Naive thymus-derived CD4-positive, alpha-beta T cell (primary cell): ENCODE measurements at regions of chr10 and their contacts with region 1.

Region 1: DNA sequence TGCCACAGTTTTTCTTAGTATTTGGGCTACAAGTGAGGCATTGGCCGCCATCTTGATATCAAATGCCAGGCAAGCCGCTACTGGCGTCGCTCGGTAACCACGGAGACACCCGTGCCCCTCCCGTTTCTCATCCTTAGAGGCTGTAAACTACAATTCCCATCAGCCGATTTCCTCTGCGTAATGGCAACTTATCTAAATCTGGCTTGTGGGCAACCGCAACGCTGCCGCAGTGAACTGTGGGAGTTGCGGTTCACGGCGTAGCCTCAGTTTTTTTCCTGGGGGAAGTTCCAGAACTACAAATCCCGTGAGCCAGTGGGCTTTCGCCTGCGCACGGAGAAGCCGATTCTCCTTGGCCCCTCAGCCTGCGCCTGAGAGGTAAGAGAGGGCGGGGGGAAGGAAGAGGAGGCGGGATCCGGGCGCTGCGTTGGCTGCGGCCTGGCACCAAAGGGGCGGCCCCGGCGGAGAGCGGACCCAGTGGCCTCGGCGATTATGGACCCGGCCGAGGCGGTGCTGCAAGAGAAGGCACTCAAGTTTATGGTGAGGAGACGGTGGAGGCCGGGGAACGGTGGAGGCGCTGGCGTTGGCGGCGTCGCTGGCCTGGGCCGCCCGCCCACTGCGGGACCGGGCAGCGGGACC is at the start of gene BTRC:
- DNase-seq: peak; percentile 76 to 99 (median 98)
- ATAC-seq: peak; percentile 96
- H3K4me3 ChIP-seq: peak within 1 kb of the TSS; percentile 69
- H3K4me3 Mint-ChIP-seq: peak within 1 kb of the TSS; percentile 93 to 99 (median 98)
- H3K27ac ChIP-seq: peak within 1 kb of the TSS; percentile 94
- H3K27ac Mint-ChIP-seq: peak within 1 kb of the TSS; percentile 94 to 99 (median 98)
- H3K4me1 ChIP-seq: peaks cover 5 to 8% of the 10 kb centered on the region in 2 donors
- H3K4me1 Mint-ChIP-seq: peaks cover 15 to 41% (median 33%) of the 10 kb centered on the region in 7 donors
- H3K27me3 ChIP-seq: no peaks in the 10 kb centered on the region
- H3K27me3 Mint-ChIP-seq: peaks cover 5 to 19% (median 14%) of the 10 kb centered on the region in 5 donors
- total RNA-seq, gene BTRC: 14.7 to 26.1 (median 17.6) TPM

Region 2: GRCh38 chr10:100185364-100186252 is 1168.2 kb before region 1 on chr10 and contains the start of gene ERLIN1:
- CTCF ChIA-PET with region 1: no interaction called
- POLR2A ChIA-PET with region 1: no interaction called
- intact Hi-C with region 1: loop called in 1 of 2 experiments (anchors 5 kb)
- DNase-seq: peak; percentile 86 to 97 (median 91)
- ATAC-seq: peak; percentile 96
- H3K4me3 ChIP-seq: peak within 1 kb of the TSS; percentile 96
- H3K4me3 Mint-ChIP-seq: peak within 1 kb of the TSS; percentile 93 to 100 (median 96)
- H3K27ac ChIP-seq: peak within 1 kb of the TSS; percentile 84
- H3K27ac Mint-ChIP-seq: peak within 1 kb of the TSS; percentile 89 to 97 (median 95)
- H3K4me1 ChIP-seq: peaks cover 15 to 17% of the 10 kb centered on the region in 2 donors
- H3K4me1 Mint-ChIP-seq: peaks cover 40 to 79% (median 62%) of the 10 kb centered on the region in 7 donors
- H3K27me3 ChIP-seq: no peaks in the 10 kb centered on the region
- H3K27me3 Mint-ChIP-seq: no peaks in the 10 kb centered on the region
- total RNA-seq, gene ERLIN1: 3.9 to 17.0 (median 12.4) TPM

Region 3: DNA sequence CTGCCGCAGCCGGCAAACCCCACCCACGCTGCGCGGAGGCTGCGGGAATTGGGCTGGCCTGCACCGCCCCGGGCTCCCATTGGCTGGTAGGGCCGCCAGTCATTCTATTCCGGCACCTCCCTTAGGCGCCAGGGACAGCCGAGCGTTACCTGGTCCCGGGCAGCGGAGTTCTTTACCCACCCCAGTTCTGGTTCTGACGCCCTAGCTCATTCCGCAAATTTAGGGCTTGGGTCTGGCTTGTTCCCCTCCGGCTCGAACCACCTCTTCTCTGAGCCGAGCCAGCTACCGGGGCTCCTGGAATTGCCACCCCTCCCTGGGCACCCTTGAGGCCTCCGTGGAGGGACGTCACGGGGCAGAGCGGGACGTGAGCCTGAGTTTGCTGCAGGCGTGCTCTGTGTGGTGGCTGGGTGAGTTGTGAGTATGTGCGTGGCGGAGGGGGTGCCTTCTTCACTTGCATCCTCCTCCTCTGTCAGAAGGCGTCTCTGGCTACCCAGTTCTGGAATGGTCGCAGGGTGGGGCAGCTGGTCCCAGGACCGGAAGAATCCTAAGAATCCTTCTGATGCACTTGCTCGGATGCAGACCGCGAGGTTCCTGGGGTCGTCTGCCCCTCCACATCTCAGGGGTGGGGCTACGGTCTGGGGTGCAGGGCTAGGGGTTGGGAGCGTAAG is 322.5 kb before region 1 on chr10 and contains the starts of genes PDZD7 and SFXN3:
- CTCF ChIA-PET with region 1: no interaction called
- POLR2A ChIA-PET with region 1: no interaction called
- intact Hi-C with region 1: loop called in 1 of 2 experiments (anchors 10 kb)
- DNase-seq: peak; percentile 93 to 98 (median 97)
- ATAC-seq: peak; percentile 88
- H3K4me3 ChIP-seq: peak within 1 kb of the TSS; percentile 99
- H3K4me3 Mint-ChIP-seq: peak within 1 kb of the TSS; percentile 85 to 99 (median 94)
- H3K27ac ChIP-seq: peak within 1 kb of the TSS; percentile 98
- H3K27ac Mint-ChIP-seq: peak within 1 kb of the TSS; percentile 75 to 97 (median 93)
- H3K4me1 ChIP-seq: peaks cover 12 to 14% of the 10 kb centered on the region in 2 donors
- H3K4me1 Mint-ChIP-seq: peaks cover 6 to 21% (median 16%) of the 10 kb centered on the region in 7 donors
- H3K27me3 ChIP-seq: no peaks in the 10 kb centered on the region
- H3K27me3 Mint-ChIP-seq: peaks cover 0 to 21% (median 0%) of the 10 kb centered on the region in 5 donors
- total RNA-seq, gene PDZD7: 0.65 to 2.8 (median 1.8) TPM
- total RNA-seq, gene SFXN3: 33.7 to 90.4 (median 48.4) TPM

Region 4: DNA sequence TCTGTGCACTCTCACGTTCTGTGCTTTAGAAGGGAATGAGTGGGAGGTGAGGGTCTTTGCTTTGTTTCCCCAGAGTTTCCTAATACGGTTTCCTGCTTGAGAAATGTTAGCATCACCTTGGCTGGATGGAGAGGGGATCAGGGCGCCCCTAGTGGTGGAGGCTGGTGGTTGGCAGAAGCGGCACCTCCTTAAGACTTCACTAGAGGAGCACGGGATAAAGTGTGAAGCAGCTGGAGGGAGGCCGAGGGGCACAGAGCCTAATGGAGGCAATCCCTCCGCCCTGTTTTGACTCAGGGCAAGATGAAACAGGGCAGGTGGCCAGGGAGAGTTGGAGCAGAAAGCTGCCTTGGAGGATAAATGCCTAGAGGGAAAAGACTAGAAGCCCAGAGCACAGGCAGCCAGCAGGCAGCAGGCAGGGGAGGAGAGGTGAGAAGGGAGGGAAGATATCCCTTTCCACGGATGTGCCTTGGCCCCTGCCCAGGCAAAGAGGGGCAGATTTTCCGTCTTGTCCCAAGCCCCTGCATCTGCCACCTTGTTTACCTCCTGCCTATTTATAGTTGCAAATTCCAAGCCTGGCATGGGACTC is 55.8 kb before region 1 on chr10:
- CTCF ChIA-PET with region 1: no interaction called
- POLR2A ChIA-PET with region 1: no interaction called
- intact Hi-C with region 1: loop called in 1 of 2 experiments (anchors 5 kb)
- DNase-seq: peak; percentile 24 to 77 (median 64)
- ATAC-seq: peak; percentile 71
- H3K4me3 ChIP-seq: no peak overlapping the region
- H3K4me3 Mint-ChIP-seq: no peak overlapping the region
- H3K27ac ChIP-seq: no peak overlapping the region
- H3K27ac Mint-ChIP-seq: peak overlapping the region in 1 of 9 donors; percentile 17
- H3K4me1 ChIP-seq: no peaks in the 10 kb centered on the region
- H3K4me1 Mint-ChIP-seq: peaks cover 0 to 6% (median 4%) of the 10 kb centered on the region in 7 donors
- H3K27me3 ChIP-seq: peaks cover 7 to 8% of the 10 kb centered on the region in 2 donors
- H3K27me3 Mint-ChIP-seq: peaks cover 44 to 75% (median 69%) of the 10 kb centered on the region in 5 donors

Region 5: DNA sequence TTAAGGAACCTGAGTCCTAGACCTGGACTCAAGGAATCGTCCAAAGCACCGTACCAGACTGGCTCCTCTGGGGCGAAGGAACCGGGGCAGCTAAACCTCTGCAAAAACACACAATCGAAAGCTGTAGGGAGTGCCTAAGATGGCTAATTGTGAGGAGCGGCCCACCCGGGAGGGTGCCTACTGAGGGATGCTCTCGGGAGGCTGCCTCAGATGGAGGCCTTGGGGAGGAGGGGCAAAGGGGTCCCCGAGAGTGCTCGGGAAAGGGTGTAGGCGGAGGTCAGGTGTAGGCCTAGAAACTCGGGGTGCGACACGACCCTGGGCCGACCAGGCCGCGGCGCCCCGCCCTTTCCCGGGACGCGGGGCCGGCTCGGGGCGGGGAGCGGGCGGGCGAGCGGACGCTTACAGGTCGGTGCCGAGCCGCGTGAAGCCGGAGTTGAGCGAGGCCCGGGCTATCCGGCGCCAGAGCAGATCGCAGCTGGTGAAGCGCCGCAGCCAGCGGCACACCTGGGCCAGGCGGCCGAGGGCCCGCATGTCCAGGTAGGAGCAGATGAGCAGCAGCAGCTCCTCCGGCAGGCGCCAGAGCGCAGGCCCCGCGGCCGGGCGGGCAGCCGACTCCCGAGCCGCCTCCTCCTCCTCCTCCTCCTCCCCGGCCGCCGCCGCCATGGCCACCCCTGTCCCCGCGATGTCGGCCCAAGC is 340.3 kb after region 1 on chr10:
- CTCF ChIA-PET with region 1: no interaction called
- POLR2A ChIA-PET with region 1: no interaction called
- intact Hi-C with region 1: loop called (anchors 1 to 10 kb)
- DNase-seq: peak; percentile 60 to 81 (median 73)
- ATAC-seq: peak; percentile 77
- H3K4me3 ChIP-seq: peak overlapping the region; percentile 57
- H3K4me3 Mint-ChIP-seq: peak overlapping the region; percentile 93 to 98 (median 96)
- H3K27ac ChIP-seq: peak overlapping the region; percentile 99
- H3K27ac Mint-ChIP-seq: peak overlapping the region; percentile 94 to 100 (median 99)
- H3K4me1 ChIP-seq: peaks cover 21 to 28% of the 10 kb centered on the region in 2 donors
- H3K4me1 Mint-ChIP-seq: peaks cover 33 to 59% (median 45%) of the 10 kb centered on the region in 7 donors
- H3K27me3 ChIP-seq: no peaks in the 10 kb centered on the region
- H3K27me3 Mint-ChIP-seq: no peaks in the 10 kb centered on the region

Region 6: GRCh38 chr10:102055647-102056419 is 702.0 kb after region 1 on chr10 and contains the start of gene ARMH3:
- CTCF ChIA-PET with region 1: no interaction called
- POLR2A ChIA-PET with region 1: no interaction called
- intact Hi-C with region 1: loop called in 1 of 2 experiments (anchors 5 kb)
- DNase-seq: peak; percentile 72 to 90 (median 87)
- ATAC-seq: peak; percentile 98
- H3K4me3 ChIP-seq: peak within 1 kb of the TSS; percentile 92
- H3K4me3 Mint-ChIP-seq: peak within 1 kb of the TSS; percentile 89 to 98 (median 94)
- H3K27ac ChIP-seq: peak within 1 kb of the TSS; percentile 87
- H3K27ac Mint-ChIP-seq: peak within 1 kb of the TSS; percentile 76 to 97 (median 92)
- H3K4me1 ChIP-seq: peaks cover 18 to 20% of the 10 kb centered on the region in 2 donors
- H3K4me1 Mint-ChIP-seq: peaks cover 25 to 50% (median 42%) of the 10 kb centered on the region in 7 donors
- H3K27me3 ChIP-seq: no peaks in the 10 kb centered on the region
- H3K27me3 Mint-ChIP-seq: no peaks in the 10 kb centered on the region
- total RNA-seq, gene ARMH3: 26.7 to 34.0 (median 28.8) TPM